Activated B cell treated with CpG ODN at 0.5 μM for 24 hours (primary cell): ENCODE measurements at regions of chr12 and their contacts with region 1.

Region 1: GRCh38 chr12:106774005-106774807 is at the start of gene RIC8B:
- DNase-seq: peak; percentile 59
- ATAC-seq: peak; percentile 80
- H3K4me3 Mint-ChIP-seq: peak within 1 kb of the TSS; percentile 88
- H3K27ac Mint-ChIP-seq: peak within 1 kb of the TSS; percentile 82
- H3K4me1 Mint-ChIP-seq: peaks cover 19% of the 10 kb centered on the region
- H3K27me3 Mint-ChIP-seq: peaks cover 6% of the 10 kb centered on the region
- CTCF ChIP-seq: no peak
- total RNA-seq, gene RIC8B: 5.8 and 7.4 TPM in 2 replicates

Region 2: GRCh38 chr12:106357549-106358395 is 416.4 kb before region 1 on chr12 and contains the start of gene POLR3B:
- CTCF ChIA-PET with region 1: no interaction called
- POLR2A ChIA-PET with region 1: no interaction called
- intact Hi-C with region 1: loop called (anchors 1 kb)
- DNase-seq: peak; percentile 96
- ATAC-seq: peak; percentile 92
- H3K4me3 Mint-ChIP-seq: peak within 1 kb of the TSS; percentile 95
- H3K27ac Mint-ChIP-seq: peak within 1 kb of the TSS; percentile 92
- H3K4me1 Mint-ChIP-seq: peaks cover 16% of the 10 kb centered on the region
- H3K27me3 Mint-ChIP-seq: no peaks in the 10 kb centered on the region
- CTCF ChIP-seq: peak; percentile 49
- total RNA-seq, gene POLR3B: 7.3 and 8.0 TPM in 2 replicates

Region 3: DNA sequence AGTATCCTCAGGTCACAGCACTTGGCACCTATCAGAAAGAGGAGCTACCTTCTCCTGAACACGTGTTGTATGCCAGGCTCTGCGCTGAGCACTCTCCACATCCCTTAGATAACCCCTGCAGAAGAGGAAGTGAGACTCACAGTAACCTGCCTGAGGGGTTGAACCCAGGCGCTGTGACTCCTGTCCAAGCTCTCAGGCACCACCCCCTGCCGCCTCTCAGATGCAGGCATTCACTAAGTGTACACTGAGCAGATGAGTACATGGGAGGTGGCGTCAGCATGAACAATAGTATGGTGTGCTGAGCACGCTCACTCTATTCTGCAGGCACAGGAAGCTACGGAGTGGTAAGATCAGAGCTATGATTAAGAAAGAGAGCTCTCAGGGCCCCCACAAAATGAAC is 20.7 kb before region 1 on chr12:
- CTCF ChIA-PET with region 1: no interaction called
- POLR2A ChIA-PET with region 1: no interaction called
- intact Hi-C with region 1: loop called (anchors 2 kb)
- DNase-seq: peak; percentile 33
- ATAC-seq: peak; percentile 99
- H3K4me3 Mint-ChIP-seq: peak overlapping the region; percentile 25
- H3K27ac Mint-ChIP-seq: no peak overlapping the region
- H3K4me1 Mint-ChIP-seq: peaks cover 18% of the 10 kb centered on the region
- H3K27me3 Mint-ChIP-seq: no peaks in the 10 kb centered on the region
- CTCF ChIP-seq: no peak

Region 4: GRCh38 chr12:106760184-106760531 is 14.0 kb before region 1 on chr12:
- CTCF ChIA-PET with region 1: no interaction called
- POLR2A ChIA-PET with region 1: no interaction called
- intact Hi-C with region 1: loop called (anchors 2 kb)
- DNase-seq: no peak
- ATAC-seq: peak; percentile 99
- H3K4me3 Mint-ChIP-seq: peak overlapping the region; percentile 70
- H3K27ac Mint-ChIP-seq: peak overlapping the region; percentile 88
- H3K4me1 Mint-ChIP-seq: peaks cover 24% of the 10 kb centered on the region
- H3K27me3 Mint-ChIP-seq: no peaks in the 10 kb centered on the region
- CTCF ChIP-seq: no peak

Region 5: DNA sequence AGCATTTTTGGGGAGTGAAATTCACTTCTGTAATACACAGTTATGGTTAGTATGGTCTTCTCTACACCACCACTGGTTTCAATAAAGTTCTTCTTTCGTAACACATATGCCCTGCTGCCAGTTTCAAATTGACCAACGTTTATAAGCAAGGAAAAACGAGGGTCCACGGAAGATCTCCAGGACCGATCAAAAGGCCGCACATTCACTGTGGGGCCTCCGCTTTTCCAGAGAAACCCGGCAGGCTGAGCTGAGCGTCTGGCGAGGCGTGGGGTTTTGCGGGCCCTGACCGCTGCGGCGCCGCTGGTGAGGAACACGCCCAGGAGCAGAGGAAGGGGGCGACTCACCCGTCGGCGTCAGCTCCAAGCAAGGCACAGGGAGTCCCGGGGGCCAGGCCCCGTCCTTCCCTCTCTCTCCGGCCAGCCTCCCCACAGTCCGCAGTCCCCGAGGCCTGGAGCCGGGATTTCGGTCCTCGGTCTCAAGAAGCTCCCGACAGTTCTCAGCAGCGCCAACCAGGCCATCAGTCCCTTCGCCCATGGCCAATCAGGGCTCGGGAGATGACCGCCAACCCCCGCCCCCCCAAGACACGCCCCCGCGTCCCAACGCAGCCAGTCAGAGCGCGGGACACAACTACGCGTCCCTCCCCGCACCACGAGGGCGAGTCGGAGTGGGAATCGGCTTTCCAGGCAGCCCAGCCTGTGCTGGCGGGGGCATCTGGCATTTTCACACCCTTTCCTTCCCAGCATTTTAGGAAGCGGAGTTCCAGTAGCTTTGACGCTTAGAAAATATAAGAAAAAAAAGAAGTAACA is 212.6 kb after region 1 on chr12 and contains the start of gene MTERF2:
- CTCF ChIA-PET with region 1: no interaction called
- POLR2A ChIA-PET with region 1: no interaction called
- intact Hi-C with region 1: loop called (anchors 10 kb)
- DNase-seq: peak; percentile 61
- ATAC-seq: peak; percentile 99
- H3K4me3 Mint-ChIP-seq: peak within 1 kb of the TSS; percentile 95
- H3K27ac Mint-ChIP-seq: peak within 1 kb of the TSS; percentile 70
- H3K4me1 Mint-ChIP-seq: peaks cover 39% of the 10 kb centered on the region
- H3K27me3 Mint-ChIP-seq: no peaks in the 10 kb centered on the region
- CTCF ChIP-seq: no peak
- total RNA-seq, gene MTERF2: 8.3 and 9.4 TPM in 2 replicates